Mammary epithelial cell (primary cell): ENCODE measurements at regions of chr2 and their contacts with region 1.

Region 1: GRCh38 chr2:85457877-85458316 is 39.4 kb downstream of the SH2D6 start:
- DNase-seq: peak; percentile 86
- H3K4me3 ChIP-seq: no peak overlapping the region
- H3K27ac ChIP-seq: no peak overlapping the region
- H3K4me1 ChIP-seq: peaks cover 15% of the 10 kb centered on the region
- H3K27me3 ChIP-seq: no peaks in the 10 kb centered on the region
- CTCF ChIP-seq: no peak

Region 2: DNA sequence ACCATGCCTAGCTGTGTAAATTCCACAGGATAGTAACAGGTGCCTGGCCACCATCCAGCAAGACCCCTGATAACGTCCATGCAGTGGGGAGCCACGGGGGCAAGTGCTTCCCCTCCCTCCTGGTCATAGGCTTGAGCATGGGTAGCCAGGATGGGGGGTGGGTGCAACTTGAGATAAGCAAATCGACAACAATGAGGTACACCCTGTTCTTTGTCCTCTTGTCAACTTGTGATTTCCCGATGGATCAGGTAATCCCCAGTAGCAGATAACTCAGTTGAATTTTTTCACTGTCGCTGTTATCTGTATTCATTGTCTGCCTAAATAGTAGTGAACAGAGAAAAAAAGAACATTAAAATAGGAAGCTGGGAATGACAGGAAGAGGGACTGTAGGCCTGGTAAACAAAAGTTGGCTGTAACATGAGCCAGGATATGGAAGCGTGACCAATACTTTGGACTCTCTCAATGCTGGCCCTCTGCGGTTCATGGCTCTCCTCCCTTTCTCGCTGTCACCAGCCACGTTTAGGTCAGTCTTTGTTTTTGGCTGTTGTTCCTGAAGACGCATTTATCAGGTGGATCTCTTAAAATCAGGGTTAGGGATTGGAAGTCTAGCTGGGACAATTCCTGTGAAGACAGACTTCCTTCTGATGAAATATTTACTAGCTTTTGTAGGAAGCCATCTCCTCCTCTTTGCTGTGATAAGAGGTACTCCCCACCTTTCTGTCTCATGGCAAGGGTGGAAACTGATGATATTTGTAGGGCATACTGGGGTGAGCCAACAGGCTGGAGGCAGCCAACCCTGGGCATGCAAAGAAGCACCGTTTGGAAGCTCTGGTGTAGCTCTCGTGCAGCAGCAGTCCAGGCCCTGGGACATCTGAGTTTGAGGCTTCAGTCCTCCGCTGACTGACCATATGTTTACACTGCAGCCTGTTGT is 282.3 kb before region 1 on chr2:
- CTCF ChIA-PET with region 1: no interaction called
- dilution Hi-C with region 1: no loop called
- in situ Hi-C with region 1: no loop called
- intact Hi-C with region 1: no loop called
- DNase-seq: no peak
- H3K4me3 ChIP-seq: no peak overlapping the region
- H3K27ac ChIP-seq: no peak overlapping the region
- H3K4me1 ChIP-seq: peaks cover 12% of the 10 kb centered on the region
- H3K27me3 ChIP-seq: no peaks in the 10 kb centered on the region
- CTCF ChIP-seq: no peak

Region 3: DNA sequence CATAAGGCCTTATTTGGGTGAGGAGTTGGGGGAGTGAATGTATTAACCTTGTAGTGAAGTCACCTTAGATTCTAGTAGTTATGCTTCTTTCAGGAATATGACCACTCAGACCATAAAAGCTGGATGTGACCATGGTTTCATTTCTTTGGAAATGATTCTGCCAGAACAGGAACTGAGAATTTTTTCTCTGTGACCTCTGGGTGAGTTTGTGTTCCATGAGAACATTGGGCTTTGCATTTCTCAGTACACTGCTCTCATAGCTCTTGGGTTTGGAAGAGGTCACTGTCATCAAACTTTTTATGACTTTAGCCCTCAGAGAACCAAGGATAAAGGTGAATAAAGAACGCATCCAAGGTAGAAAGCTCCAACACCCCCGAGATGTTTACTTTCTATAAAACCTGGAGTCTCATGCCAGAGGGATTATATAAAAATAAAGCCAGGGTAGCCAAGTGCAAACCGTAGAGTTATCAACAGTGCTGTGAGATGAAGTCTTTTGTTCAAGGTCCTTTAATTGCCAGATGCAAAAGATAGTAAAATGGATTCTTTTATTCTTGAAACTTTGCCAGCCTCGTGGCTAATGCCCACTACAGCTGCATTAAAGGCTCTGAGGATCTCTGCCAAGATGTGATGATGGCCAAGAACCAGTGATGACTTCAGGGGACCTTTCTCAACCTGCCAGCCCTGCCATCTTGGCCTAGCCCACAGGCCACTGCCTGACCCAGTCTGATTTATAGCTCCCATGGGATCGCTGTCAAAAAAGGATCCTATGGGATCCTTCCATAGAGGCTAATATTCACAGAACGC is 53.3 kb after region 1 on chr2:
- CTCF ChIA-PET with region 1: no interaction called
- dilution Hi-C with region 1: loop called (anchors 10 kb)
- in situ Hi-C with region 1: no loop called
- intact Hi-C with region 1: no loop called
- DNase-seq: no peak
- H3K4me3 ChIP-seq: no peak overlapping the region
- H3K27ac ChIP-seq: no peak overlapping the region
- H3K4me1 ChIP-seq: no peaks in the 10 kb centered on the region
- H3K27me3 ChIP-seq: no peaks in the 10 kb centered on the region
- CTCF ChIP-seq: no peak